ENCODE measurements at regions of chr3 and their contacts with region 1.

Region 1: GRCh38 chr3:142578327-142579223 is at the start of gene ATR:
- DNase-seq: peak; percentile 96
- H3K4me3 Mint-ChIP-seq: peak within 1 kb of the TSS; percentile 100
- H3K27ac Mint-ChIP-seq: peak within 1 kb of the TSS; percentile 100
- H3K4me1 Mint-ChIP-seq: peaks cover 46% of the 10 kb centered on the region
- H3K27me3 Mint-ChIP-seq: peaks cover 10% of the 10 kb centered on the region
- total RNA-seq, gene ATR: 27.0 and 35.5 TPM in 2 replicates

Region 2: GRCh38 chr3:142509079-142509478 is 69.5 kb before region 1 on chr3:
- intact Hi-C with region 1: loop called (anchors 1 kb)
- DNase-seq: no peak
- H3K4me3 Mint-ChIP-seq: peak overlapping the region; percentile 75
- H3K27ac Mint-ChIP-seq: peak overlapping the region; percentile 88
- H3K4me1 Mint-ChIP-seq: peaks cover 12% of the 10 kb centered on the region
- H3K27me3 Mint-ChIP-seq: no peaks in the 10 kb centered on the region

Region 3: DNA sequence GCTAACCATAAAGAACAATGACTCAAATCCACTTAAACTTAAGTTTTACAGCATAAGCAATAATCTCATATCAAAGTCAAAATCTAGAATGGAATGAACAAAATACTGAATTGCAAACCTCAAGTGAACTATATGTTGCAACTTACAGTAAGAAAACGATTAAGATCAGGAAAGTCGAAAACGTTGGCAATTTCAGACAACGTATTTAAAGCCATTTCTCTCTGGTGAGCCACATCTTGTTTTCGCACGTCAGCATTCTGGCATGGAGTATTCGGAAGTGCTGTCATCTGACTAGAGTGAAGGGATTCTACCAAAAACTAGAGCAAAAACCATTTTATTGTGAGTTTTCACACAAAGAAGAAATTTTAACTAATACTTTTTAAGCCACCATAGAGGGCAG is 28.6 kb before region 1 on chr3:
- intact Hi-C with region 1: no loop called
- DNase-seq: no peak
- H3K4me3 Mint-ChIP-seq: no peak overlapping the region
- H3K27ac Mint-ChIP-seq: no peak overlapping the region
- H3K4me1 Mint-ChIP-seq: no peaks in the 10 kb centered on the region
- H3K27me3 Mint-ChIP-seq: no peaks in the 10 kb centered on the region

Region 4: DNA sequence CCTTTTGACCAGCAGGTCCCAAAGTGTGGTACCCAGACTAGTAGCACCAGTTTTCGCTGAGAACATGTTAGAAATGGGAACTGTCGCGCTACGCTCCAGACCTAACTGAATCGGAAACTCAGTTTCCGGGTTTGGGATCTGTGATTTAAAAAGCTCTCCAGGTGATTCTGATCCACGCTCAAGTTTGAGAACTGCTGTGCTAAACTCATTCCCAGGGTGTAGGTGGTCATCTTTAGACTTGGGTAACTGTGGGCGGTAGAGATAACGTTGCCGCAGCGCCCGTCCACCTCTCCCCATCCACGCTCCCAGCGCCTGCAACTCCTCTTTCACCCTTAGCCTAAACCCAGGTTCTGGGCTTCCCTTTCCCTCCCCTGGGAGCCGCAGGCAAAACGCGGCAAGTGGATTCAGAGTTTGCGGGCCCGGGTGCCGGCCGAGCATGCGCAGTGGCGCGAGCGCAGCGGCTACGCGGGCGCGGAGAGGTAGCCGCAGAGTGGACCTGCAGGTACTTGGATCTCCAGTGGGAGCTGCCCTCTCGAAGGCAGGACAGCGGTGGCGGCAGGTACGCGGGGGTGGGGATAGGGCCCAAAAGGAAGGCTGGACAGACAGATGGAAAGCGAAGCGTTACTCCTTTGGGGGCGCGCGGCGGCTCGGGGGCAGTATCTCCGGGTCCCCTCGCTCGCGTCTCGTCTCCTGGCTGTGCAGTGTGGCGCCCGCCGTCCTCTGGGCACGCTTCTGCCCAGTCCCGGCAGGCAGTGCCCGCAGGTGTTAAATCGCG is 17.6 kb after region 1 on chr3 and contains the start of gene PLS1:
- intact Hi-C with region 1: loop called (anchors 1 kb)
- DNase-seq: peak; percentile 89
- H3K4me3 Mint-ChIP-seq: peak within 1 kb of the TSS; percentile 95
- H3K27ac Mint-ChIP-seq: peak within 1 kb of the TSS; percentile 69
- H3K4me1 Mint-ChIP-seq: peaks cover 25% of the 10 kb centered on the region
- H3K27me3 Mint-ChIP-seq: peaks cover 4% of the 10 kb centered on the region
- total RNA-seq, gene PLS1: 4.4 and 4.8 TPM in 2 replicates

Region 5: GRCh38 chr3:142723968-142724681 is 145.6 kb after region 1 on chr3 and contains the start of gene TRPC1:
- intact Hi-C with region 1: loop called (anchors 1 kb)
- DNase-seq: peak; percentile 73
- H3K4me3 Mint-ChIP-seq: peak within 1 kb of the TSS; percentile 86
- H3K27ac Mint-ChIP-seq: peak within 1 kb of the TSS; percentile 83
- H3K4me1 Mint-ChIP-seq: peaks cover 4% of the 10 kb centered on the region
- H3K27me3 Mint-ChIP-seq: peaks cover 50% of the 10 kb centered on the region
- total RNA-seq, gene TRPC1: 0.66 and 1.1 TPM in 2 replicates

Measured in activated T-helper 1 cell treated with anti-CD3 and anti-CD28 coated beads, Interleukin-12 subunit alpha, Interleukin-12 subunit beta, Interleukin-2, Interleukin-4 antibody, amounts not matched to agents 30 ng/mL and 10 ng/mL and 1 ng/mL, durations not matched to agents 14 hours and 24 hours and 36 hours (primary cell).